Left lung (tissue), 14 donors: ENCODE measurements at regions of chr5 and their contacts with region 1.

Region 1: GRCh38 chr5:95846554-95847260 is 24.2 kb upstream of the GLRX start:
- DNase-seq: peak in 1 of 4 donors; percentile 72
- ATAC-seq: peak; percentile 74
- H3K4me3 ChIP-seq: no peak overlapping the region
- H3K27ac ChIP-seq: no peak overlapping the region
- H3K4me1 ChIP-seq: peaks cover 8 to 33% of the 10 kb centered on the region in 2 donors
- H3K27me3 ChIP-seq: no peaks in the 10 kb centered on the region
- CTCF ChIP-seq: peak; percentile 91 to 92

Region 2: DNA sequence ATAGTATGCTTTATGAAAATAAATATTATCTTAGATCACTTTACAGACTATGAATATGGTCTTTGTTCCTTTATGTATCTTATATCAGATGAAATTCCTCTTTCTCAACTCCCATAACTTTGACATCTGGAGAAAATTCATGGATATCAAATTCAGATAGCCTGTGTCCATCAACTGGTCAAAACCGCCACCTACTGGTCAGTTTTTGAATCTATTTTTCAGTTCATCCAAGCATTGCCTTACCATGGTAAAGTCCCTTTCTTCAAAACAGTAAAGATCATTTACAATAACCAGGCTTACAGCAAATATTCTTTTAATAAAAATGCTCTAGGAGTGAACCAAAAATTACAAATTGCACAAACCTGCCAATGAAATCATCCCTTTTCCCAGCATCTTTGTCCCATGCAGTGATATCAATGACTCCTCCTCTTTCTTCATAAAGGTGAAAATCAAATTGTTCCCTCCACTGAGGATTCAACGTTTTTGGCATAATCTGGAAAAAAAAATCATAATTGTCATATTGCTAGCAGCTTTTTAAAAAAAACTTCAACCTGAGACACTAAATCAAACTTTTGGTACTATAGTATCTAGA is 937.7 kb before region 1 on chr5:
- intact Hi-C with region 1: no loop called
- DNase-seq: peak in 2 of 4 donors; percentile 16 to 38
- ATAC-seq: peak; percentile 41
- H3K4me3 ChIP-seq: no peak overlapping the region
- H3K27ac ChIP-seq: no peak overlapping the region
- H3K4me1 ChIP-seq: no peaks in the 10 kb centered on the region
- H3K27me3 ChIP-seq: no peaks in the 10 kb centered on the region
- CTCF ChIP-seq: peak; percentile 46 to 51

Region 3: DNA sequence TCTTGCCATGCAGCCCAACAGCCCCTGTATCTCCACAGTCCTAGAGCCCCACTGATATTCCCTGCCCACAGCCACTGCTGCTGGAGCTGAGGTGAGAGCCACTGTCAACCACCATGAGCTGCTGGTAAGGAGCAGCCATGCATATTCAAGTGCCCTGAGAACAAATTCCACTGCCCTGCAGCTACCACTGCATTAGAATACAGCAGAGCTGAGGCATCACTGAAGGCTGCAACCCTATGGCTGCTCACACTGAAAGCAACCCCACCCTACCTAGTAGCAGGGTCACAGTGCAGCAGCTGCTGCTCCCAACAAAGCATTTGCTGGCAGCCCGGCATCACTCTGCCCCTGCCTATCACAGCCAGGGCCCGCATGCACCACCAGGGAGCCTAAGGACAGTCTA is 360.5 kb before region 1 on chr5:
- intact Hi-C with region 1: no loop called
- DNase-seq: no peak
- ATAC-seq: no peak
- H3K4me3 ChIP-seq: no peak overlapping the region
- H3K27ac ChIP-seq: no peak overlapping the region
- H3K4me1 ChIP-seq: no peaks in the 10 kb centered on the region
- H3K27me3 ChIP-seq: no peaks in the 10 kb centered on the region
- CTCF ChIP-seq: no peak

Region 4: DNA sequence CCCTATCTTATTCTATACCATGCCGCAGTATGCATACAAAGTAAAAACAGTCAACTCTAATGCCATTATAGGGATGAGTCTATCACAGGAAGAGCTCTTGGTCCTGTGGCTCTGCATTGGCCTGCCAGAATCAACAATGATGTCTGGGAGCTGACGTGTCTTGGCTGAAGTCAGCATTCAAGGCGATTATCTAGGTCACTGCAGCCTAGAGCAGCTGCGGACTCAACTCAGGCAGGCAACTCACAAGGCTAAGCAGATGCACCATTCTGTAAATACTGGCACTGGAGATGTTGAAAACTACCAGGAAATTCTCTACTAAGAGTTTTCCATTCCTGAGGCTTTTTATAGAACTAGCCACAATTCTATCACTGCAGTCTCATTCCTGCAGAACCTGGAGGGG is 177.2 kb before region 1 on chr5:
- intact Hi-C with region 1: loop called in 1 of 2 experiments (anchors 5 kb)
- DNase-seq: peak in 1 of 4 donors; percentile 64
- ATAC-seq: peak; percentile 68
- H3K4me3 ChIP-seq: no peak overlapping the region
- H3K27ac ChIP-seq: no peak overlapping the region
- H3K4me1 ChIP-seq: peaks cover 2 to 4% of the 10 kb centered on the region in 2 donors
- H3K27me3 ChIP-seq: no peaks in the 10 kb centered on the region
- CTCF ChIP-seq: no peak

Region 5: GRCh38 chr5:95781101-95781583 is 65.6 kb before region 1 on chr5:
- intact Hi-C with region 1: loop called (anchors 5 to 10 kb)
- DNase-seq: peak; percentile 72 to 82 (median 82)
- ATAC-seq: peak; percentile 98
- H3K4me3 ChIP-seq: no peak overlapping the region
- H3K27ac ChIP-seq: peak overlapping the region; percentile 16 to 53
- H3K4me1 ChIP-seq: peaks cover 0 to 28% of the 10 kb centered on the region in 2 donors
- H3K27me3 ChIP-seq: no peaks in the 10 kb centered on the region
- CTCF ChIP-seq: peak; percentile 83 to 92

Region 6: GRCh38 chr5:95927927-95928723 is 81.4 kb after region 1 on chr5:
- intact Hi-C with region 1: no loop called
- DNase-seq: no peak
- ATAC-seq: no peak
- H3K4me3 ChIP-seq: no peak overlapping the region
- H3K27ac ChIP-seq: peak overlapping the region; percentile 10 to 26
- H3K4me1 ChIP-seq: peaks cover 19 to 34% of the 10 kb centered on the region in 2 donors
- H3K27me3 ChIP-seq: no peaks in the 10 kb centered on the region
- CTCF ChIP-seq: no peak